ENCODE measurements at regions of chr6 and their contacts with region 1.

Region 1: DNA sequence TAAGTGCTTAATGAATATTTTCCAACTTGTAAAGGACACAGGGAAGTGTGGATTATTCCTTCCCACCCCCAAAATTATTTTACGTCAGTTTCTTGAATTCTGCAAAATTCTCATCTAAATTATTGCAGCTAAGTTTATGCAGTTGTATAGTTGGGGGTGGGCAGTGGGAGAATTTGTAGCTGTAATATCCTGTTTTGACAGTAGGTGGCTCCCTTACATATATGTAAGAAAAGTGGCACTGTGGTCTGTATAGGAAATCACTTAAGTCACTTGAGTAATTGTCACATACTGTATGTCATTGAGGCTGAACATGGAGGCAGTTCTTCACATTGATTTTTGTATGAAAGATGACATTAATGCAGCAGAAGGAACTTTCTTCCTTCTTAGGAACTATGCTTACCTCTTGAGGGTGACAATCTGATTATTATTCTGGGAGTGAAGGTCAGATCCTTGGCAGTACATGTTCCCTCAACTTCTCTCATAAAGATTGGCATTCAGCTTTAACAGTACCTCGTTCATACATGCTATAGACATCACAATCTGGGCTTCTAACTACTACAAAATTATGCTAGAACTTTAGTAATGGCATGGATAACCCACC is 14.7 kb upstream of the CFAP206 start:
- DNase-seq: peak; percentile 79
- ATAC-seq: peak; percentile 86
- H3K4me3 ChIP-seq: no peak overlapping the region
- H3K4me3 Mint-ChIP-seq: no peak overlapping the region
- H3K27ac ChIP-seq: no peak overlapping the region
- H3K27ac Mint-ChIP-seq: no peak overlapping the region
- H3K4me1 ChIP-seq: no peaks in the 10 kb centered on the region
- H3K4me1 Mint-ChIP-seq: peaks cover 5% of the 10 kb centered on the region
- H3K27me3 ChIP-seq: no peaks in the 10 kb centered on the region
- H3K27me3 Mint-ChIP-seq: no peaks in the 10 kb centered on the region
- CTCF ChIP-seq: peak; percentile 84

Region 2: GRCh38 chr6:87078983-87079616 is 314.0 kb before region 1 on chr6:
- CTCF ChIA-PET with region 1: no interaction called
- POLR2A ChIA-PET with region 1: no interaction called
- intact Hi-C with region 1: loop called (anchors 10 kb)
- DNase-seq: peak; percentile 64
- ATAC-seq: peak; percentile 73
- H3K4me3 ChIP-seq: no peak overlapping the region
- H3K4me3 Mint-ChIP-seq: no peak overlapping the region
- H3K27ac ChIP-seq: no peak overlapping the region
- H3K27ac Mint-ChIP-seq: no peak overlapping the region
- H3K4me1 ChIP-seq: peaks cover 0 to 8% of the 10 kb centered on the region in 2 donors
- H3K4me1 Mint-ChIP-seq: peaks cover 21% of the 10 kb centered on the region
- H3K27me3 ChIP-seq: no peaks in the 10 kb centered on the region
- H3K27me3 Mint-ChIP-seq: no peaks in the 10 kb centered on the region
- CTCF ChIP-seq: peak; percentile 89

Region 3: DNA sequence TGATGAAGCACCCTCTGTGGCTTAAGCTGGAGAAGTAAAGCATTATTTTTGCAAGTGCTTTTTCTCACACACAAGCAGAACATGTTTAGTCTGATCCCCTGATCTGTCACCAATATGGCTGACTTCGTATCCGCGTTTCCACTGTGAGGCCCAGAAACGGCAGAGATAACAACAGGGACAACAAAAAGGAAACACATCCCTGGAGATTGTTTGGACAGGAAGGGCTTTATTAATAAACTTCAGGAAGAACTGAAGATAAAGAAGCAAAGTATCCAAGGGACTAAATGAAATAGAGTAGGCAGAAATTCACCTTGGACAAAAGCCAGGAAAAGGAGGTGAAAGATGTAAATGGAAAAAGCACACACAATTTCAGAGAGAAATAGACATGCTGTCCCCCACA is 147.4 kb after region 1 on chr6:
- CTCF ChIA-PET with region 1: no interaction called
- POLR2A ChIA-PET with region 1: no interaction called
- intact Hi-C with region 1: no loop called
- DNase-seq: no peak
- ATAC-seq: no peak
- H3K4me3 ChIP-seq: no peak overlapping the region
- H3K4me3 Mint-ChIP-seq: no peak overlapping the region
- H3K27ac ChIP-seq: no peak overlapping the region
- H3K27ac Mint-ChIP-seq: no peak overlapping the region
- H3K4me1 ChIP-seq: peaks cover 8 to 12% of the 10 kb centered on the region in 2 donors
- H3K4me1 Mint-ChIP-seq: peaks cover 17% of the 10 kb centered on the region
- H3K27me3 ChIP-seq: no peaks in the 10 kb centered on the region
- H3K27me3 Mint-ChIP-seq: no peaks in the 10 kb centered on the region
- CTCF ChIP-seq: no peak

Region 4: DNA sequence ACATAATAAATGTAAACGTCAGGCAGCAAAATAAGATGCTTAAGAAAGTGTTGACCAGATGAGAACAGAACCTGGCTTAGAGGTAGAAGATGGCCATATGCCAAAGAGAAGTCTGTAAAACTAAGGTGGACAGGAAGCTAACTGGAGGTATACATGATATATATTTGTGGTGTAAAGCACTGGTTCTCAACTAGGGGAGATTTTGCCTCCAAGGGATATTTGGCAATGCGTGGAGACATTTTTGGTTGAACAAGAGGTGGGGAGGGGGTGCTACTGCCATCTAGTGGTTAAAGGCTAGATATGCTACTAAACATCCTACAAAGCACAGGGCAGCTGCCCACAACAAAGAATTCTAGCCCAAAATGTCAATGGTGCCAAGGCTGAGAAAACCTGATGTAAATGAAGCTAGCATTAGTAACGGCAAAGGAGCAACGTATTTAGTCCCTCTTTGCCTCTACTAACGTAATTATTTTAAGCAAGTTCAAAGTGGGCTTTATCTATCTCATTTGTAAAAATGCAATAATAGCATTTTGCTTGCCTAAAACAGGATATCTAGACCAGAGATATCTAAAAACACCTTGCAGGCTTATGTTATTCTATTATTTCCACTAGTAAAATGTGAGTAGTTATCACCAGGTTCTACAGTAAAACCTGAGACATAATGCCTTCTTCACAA is 1387.7 kb after region 1 on chr6:
- CTCF ChIA-PET with region 1: interaction called, 12 read pairs
- POLR2A ChIA-PET with region 1: no interaction called
- intact Hi-C with region 1: loop called (anchors 1 kb)
- DNase-seq: peak; percentile 82
- ATAC-seq: peak; percentile 81
- H3K4me3 ChIP-seq: no peak overlapping the region
- H3K4me3 Mint-ChIP-seq: no peak overlapping the region
- H3K27ac ChIP-seq: no peak overlapping the region
- H3K27ac Mint-ChIP-seq: no peak overlapping the region
- H3K4me1 ChIP-seq: peaks cover 0 to 13% of the 10 kb centered on the region in 2 donors
- H3K4me1 Mint-ChIP-seq: peaks cover 16% of the 10 kb centered on the region
- H3K27me3 ChIP-seq: no peaks in the 10 kb centered on the region
- H3K27me3 Mint-ChIP-seq: no peaks in the 10 kb centered on the region
- CTCF ChIP-seq: peak; percentile 90